SK-N-SH (cell line): ENCODE measurements at regions of chr22 and their contacts with region 1.

Region 1: GRCh38 chr22:19800761-19801244 is 40.2 kb downstream of the TBX1 start:
- DNase-seq: peak; percentile 61
- H3K4me3 ChIP-seq: no peak overlapping the region
- H3K27ac ChIP-seq: no peak overlapping the region; a peak in 1 of 4 replicates
- H3K4me1 ChIP-seq: peaks cover 17 to 69% of the 10 kb centered on the region in 2 experiments; a peak in 3 of 4 replicates
- H3K27me3 ChIP-seq: no peaks in the 10 kb centered on the region
- CTCF ChIP-seq: peak; percentile 52
- EP300 ChIP-seq: no peak
- RAD21 ChIP-seq: peak; percentile 33

Region 2: GRCh38 chr22:19756288-19757128 is 44.3 kb before region 1 on chr22:
- CTCF ChIA-PET with region 1: interaction called, 13 read pairs
- POLR2A ChIA-PET with region 1: no interaction called
- DNase-seq: peak; percentile 78
- H3K4me3 ChIP-seq: no peak overlapping the region
- H3K27ac ChIP-seq: no peak overlapping the region
- H3K4me1 ChIP-seq: peaks cover 0 to 6% of the 10 kb centered on the region in 2 experiments; a peak in 2 of 4 replicates
- H3K27me3 ChIP-seq: peaks cover 53% of the 10 kb centered on the region
- CTCF ChIP-seq: peak; percentile 47
- EP300 ChIP-seq: no peak
- RAD21 ChIP-seq: peak; percentile 46

Region 3: DNA sequence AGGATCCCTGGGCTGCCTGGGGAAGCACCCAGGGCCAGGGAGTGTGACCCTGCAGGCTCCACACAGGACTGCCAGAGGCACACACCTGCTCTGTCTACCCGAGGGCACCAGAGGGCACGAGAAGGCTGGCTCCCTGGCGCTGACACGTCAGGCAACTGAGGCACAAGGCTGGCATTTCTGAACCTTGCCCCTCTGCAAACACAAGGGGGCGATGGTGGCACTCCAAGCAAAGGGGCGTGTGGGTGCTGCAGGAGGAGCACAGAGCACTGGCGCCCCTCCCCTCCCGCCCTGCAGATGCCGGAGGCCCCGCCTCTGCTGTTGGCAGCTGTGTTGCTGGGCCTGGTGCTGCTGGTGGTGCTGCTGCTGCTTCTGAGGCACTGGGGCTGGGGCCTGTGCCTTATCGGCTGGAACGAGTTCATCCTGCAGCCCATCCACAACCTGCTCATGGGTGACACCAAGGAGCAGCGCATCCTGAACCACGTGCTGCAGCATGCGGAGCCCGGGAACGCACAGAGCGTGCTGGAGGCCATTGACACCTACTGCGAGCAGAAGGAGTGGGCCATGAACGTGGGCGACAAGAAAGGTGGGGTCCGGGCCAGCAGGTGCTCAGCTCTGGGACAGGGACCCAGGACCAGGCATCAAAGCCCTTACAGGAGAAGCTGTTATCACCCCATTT is 161.6 kb after region 1 on chr22:
- CTCF ChIA-PET with region 1: no interaction called
- POLR2A ChIA-PET with region 1: no interaction called
- DNase-seq: peak; percentile 97
- H3K4me3 ChIP-seq: no peak overlapping the region
- H3K27ac ChIP-seq: peak overlapping the region in 1 of 2 experiments; percentile 70; a peak in 2 of 4 replicates
- H3K4me1 ChIP-seq: peaks cover 7 to 14% of the 10 kb centered on the region in 2 experiments; a peak in 2 of 4 replicates
- H3K27me3 ChIP-seq: no peaks in the 10 kb centered on the region
- CTCF ChIP-seq: peak; percentile 69
- EP300 ChIP-seq: no peak
- RAD21 ChIP-seq: peak; percentile 69